Psoas muscle (tissue), 8 donors: ENCODE measurements at regions of chr17 and their contacts with region 1.

Region 1: GRCh38 chr17:45385331-45385997 is 47.2 kb downstream of the ARHGAP27 start:
- DNase-seq: peak; percentile 89 to 94
- ATAC-seq: peak; percentile 90 to 99 (median 94)
- H3K4me3 ChIP-seq: no peak overlapping the region
- H3K27ac ChIP-seq: peak overlapping the region; percentile 46
- H3K4me1 ChIP-seq: peaks cover 4% of the 10 kb centered on the region
- H3K27me3 ChIP-seq: peaks cover 0 to 1% (median 0%) of the 10 kb centered on the region in 3 donors
- CTCF ChIP-seq: peak; percentile 99

Region 2: GRCh38 chr17:45261577-45262515 is 123.6 kb before region 1 on chr17 and contains the start of gene SPATA32:
- intact Hi-C with region 1: loop called in 1 of 2 experiments (anchors 5 kb)
- DNase-seq: peak; percentile 63 to 76
- ATAC-seq: peak in 3 of 4 donors; percentile 7 to 29 (median 8)
- H3K4me3 ChIP-seq: peak within 1 kb of the TSS; percentile 68
- H3K27ac ChIP-seq: peak within 1 kb of the TSS; percentile 70
- H3K4me1 ChIP-seq: peaks cover 70% of the 10 kb centered on the region
- H3K27me3 ChIP-seq: no peaks in the 10 kb centered on the region
- CTCF ChIP-seq: no peak
- total RNA-seq, gene SPATA32: 0.11 TPM in 1 of 4 donors, not detected in the others

Region 3: DNA sequence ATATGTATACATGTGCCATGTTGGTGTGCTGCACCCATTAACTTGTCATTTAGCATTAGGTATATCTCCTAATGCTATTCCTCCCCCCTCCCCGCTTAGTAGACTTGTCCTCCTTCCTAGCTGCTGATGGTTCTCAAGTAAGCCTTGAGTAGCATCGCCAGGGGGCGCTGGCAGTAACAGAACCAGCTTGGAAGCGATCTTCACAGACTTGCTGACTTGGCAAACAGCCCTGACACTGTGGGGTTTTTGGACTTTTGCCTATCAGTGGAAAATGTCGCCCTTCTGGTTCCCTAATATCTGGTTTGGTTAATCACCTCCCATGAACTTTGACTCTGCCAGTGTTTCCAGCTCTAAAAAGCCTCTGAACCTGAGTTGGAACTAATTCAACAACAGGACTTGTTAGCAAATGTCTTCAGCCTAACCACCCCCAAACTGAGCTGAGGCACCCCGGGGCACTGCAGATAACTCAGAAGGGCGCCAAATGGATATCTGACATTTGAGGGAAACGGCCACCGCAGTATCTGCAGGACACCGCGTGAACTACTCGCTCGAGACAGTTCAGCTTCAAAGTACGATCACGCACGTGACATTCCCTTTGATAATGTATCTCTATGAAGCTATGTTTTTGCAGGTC is 108.1 kb before region 1 on chr17:
- intact Hi-C with region 1: loop called (anchors 1 to 5 kb)
- DNase-seq: peak; percentile 92 to 96
- ATAC-seq: peak; percentile 60 to 84 (median 72)
- H3K4me3 ChIP-seq: peak overlapping the region; percentile 15
- H3K27ac ChIP-seq: peak overlapping the region; percentile 73
- H3K4me1 ChIP-seq: peaks cover 50% of the 10 kb centered on the region
- H3K27me3 ChIP-seq: no peaks in the 10 kb centered on the region
- CTCF ChIP-seq: peak; percentile 74